CD14-positive monocyte (primary cell): ENCODE measurements at regions of chr7 and their contacts with region 1.

Region 1: GRCh38 chr7:38107486-38107893 is 70.6 kb upstream of the STARD3NL start:
- DNase-seq: peak; percentile 33 to 55 (median 48)
- H3K4me3 ChIP-seq: no peak overlapping the region
- H3K4me3 Mint-ChIP-seq: no peak overlapping the region
- H3K27ac ChIP-seq: no peak overlapping the region
- H3K27ac Mint-ChIP-seq: no peak overlapping the region
- H3K4me1 ChIP-seq: no peaks in the 10 kb centered on the region
- H3K4me1 Mint-ChIP-seq: peaks cover 10% of the 10 kb centered on the region
- H3K27me3 ChIP-seq: no peaks in the 10 kb centered on the region
- H3K27me3 Mint-ChIP-seq: no peaks in the 10 kb centered on the region
- CTCF ChIP-seq: peak; percentile 87

Region 2: GRCh38 chr7:38222481-38223096 is 115.1 kb after region 1 on chr7:
- intact Hi-C with region 1: loop called (anchors 2 to 5 kb)
- DNase-seq: peak; percentile 23 to 53 (median 43)
- H3K4me3 ChIP-seq: no peak overlapping the region
- H3K4me3 Mint-ChIP-seq: no peak overlapping the region
- H3K27ac ChIP-seq: peak overlapping the region in 1 of 2 donors; percentile 43
- H3K27ac Mint-ChIP-seq: peak overlapping the region in 4 of 7 donors; percentile 37 to 76 (median 59)
- H3K4me1 ChIP-seq: peaks cover 11 to 16% of the 10 kb centered on the region in 2 donors
- H3K4me1 Mint-ChIP-seq: peaks cover 25% of the 10 kb centered on the region
- H3K27me3 ChIP-seq: no peaks in the 10 kb centered on the region
- H3K27me3 Mint-ChIP-seq: no peaks in the 10 kb centered on the region
- CTCF ChIP-seq: peak; percentile 85

Region 3: GRCh38 chr7:38369816-38370493 is 262.5 kb after region 1 on chr7:
- intact Hi-C with region 1: loop called (anchors 2 to 5 kb)
- DNase-seq: peak; percentile 95 to 99 (median 99)
- H3K4me3 ChIP-seq: peak overlapping the region in 1 of 3 experiments; percentile 29
- H3K4me3 Mint-ChIP-seq: peak overlapping the region in 1 of 2 donors; percentile 65
- H3K27ac ChIP-seq: peak overlapping the region; percentile 76 to 88
- H3K27ac Mint-ChIP-seq: peak overlapping the region; percentile 87 to 99 (median 97)
- H3K4me1 ChIP-seq: peaks cover 33% of the 10 kb centered on the region in 2 donors
- H3K4me1 Mint-ChIP-seq: peaks cover 30% of the 10 kb centered on the region
- H3K27me3 ChIP-seq: no peaks in the 10 kb centered on the region
- H3K27me3 Mint-ChIP-seq: no peaks in the 10 kb centered on the region
- CTCF ChIP-seq: peak; percentile 96